ENCODE measurements at regions of chr1 and their contacts with region 1.

Region 1: GRCh38 chr1:114511032-114511785 is at the start of gene TRIM33:
- DNase-seq: peak; percentile 84 to 95 (median 93)
- H3K4me3 ChIP-seq: peak within 1 kb of the TSS; percentile 87
- H3K4me3 Mint-ChIP-seq: peak within 1 kb of the TSS; percentile 95 to 100 (median 99)
- H3K27ac ChIP-seq: peak within 1 kb of the TSS; percentile 99
- H3K27ac Mint-ChIP-seq: peak within 1 kb of the TSS; percentile 99 to 100 (median 100)
- H3K4me1 ChIP-seq: peaks cover 43% of the 10 kb centered on the region
- H3K4me1 Mint-ChIP-seq: peaks cover 52 to 59% (median 54%) of the 10 kb centered on the region in 3 donors
- H3K27me3 ChIP-seq: no peaks in the 10 kb centered on the region
- H3K27me3 Mint-ChIP-seq: peaks cover 0 to 7% of the 10 kb centered on the region in 2 donors
- total RNA-seq, gene TRIM33: 32.0 to 35.6 TPM

Region 2: DNA sequence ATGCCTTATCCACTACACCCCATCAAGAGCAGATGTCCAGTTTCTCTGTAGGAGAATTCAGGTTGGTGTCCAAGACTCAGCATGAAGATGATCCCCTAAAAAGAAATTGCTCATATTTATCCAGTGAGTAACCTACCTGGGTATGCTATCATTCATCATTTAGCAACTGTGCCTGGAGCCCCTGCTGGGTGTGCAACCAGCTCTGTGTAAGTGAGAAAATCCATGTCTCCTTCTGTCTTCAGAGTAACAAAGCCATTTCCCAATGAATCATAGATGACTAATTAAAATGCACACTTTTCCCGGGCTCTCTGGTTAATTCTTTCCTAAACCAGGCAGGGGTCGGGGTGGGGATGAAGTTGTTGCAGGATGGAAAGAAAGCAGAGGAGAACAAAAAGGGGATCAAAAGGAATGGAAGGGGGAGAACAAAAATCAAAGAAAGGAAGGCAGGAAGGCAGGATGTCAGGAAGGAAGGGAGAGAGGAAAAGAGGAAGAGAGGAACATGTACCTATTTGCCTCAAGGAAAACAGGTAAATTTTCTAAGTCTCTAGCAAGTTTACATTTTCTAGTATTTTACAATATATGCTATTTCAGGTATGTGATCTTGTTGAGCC is 496.0 kb before region 1 on chr1:
- CTCF ChIA-PET with region 1: no interaction called
- POLR2A ChIA-PET with region 1: no interaction called
- DNase-seq: no peak
- H3K4me3 ChIP-seq: no peak overlapping the region
- H3K4me3 Mint-ChIP-seq: no peak overlapping the region
- H3K27ac ChIP-seq: no peak overlapping the region
- H3K27ac Mint-ChIP-seq: no peak overlapping the region
- H3K4me1 ChIP-seq: no peaks in the 10 kb centered on the region
- H3K4me1 Mint-ChIP-seq: no peaks in the 10 kb centered on the region
- H3K27me3 ChIP-seq: no peaks in the 10 kb centered on the region
- H3K27me3 Mint-ChIP-seq: peaks cover 16 to 24% of the 10 kb centered on the region in 2 donors

Region 3: GRCh38 chr1:114418247-114418646 is 93.0 kb before region 1 on chr1:
- CTCF ChIA-PET with region 1: no interaction called
- POLR2A ChIA-PET with region 1: no interaction called
- DNase-seq: no peak
- H3K4me3 ChIP-seq: no peak overlapping the region
- H3K4me3 Mint-ChIP-seq: no peak overlapping the region
- H3K27ac ChIP-seq: no peak overlapping the region
- H3K27ac Mint-ChIP-seq: peak overlapping the region in 1 of 8 donors; percentile 6
- H3K4me1 ChIP-seq: no peaks in the 10 kb centered on the region
- H3K4me1 Mint-ChIP-seq: no peaks in the 10 kb centered on the region
- H3K27me3 ChIP-seq: no peaks in the 10 kb centered on the region
- H3K27me3 Mint-ChIP-seq: no peaks in the 10 kb centered on the region

Region 4: GRCh38 chr1:114482204-114482980 is 28.8 kb before region 1 on chr1:
- CTCF ChIA-PET with region 1: no interaction called
- POLR2A ChIA-PET with region 1: interaction called, 11 read pairs
- DNase-seq: peak in 2 of 5 donors; percentile 11 to 14
- H3K4me3 ChIP-seq: no peak overlapping the region
- H3K4me3 Mint-ChIP-seq: peak overlapping the region in 5 of 7 donors; percentile 8 to 55 (median 48)
- H3K27ac ChIP-seq: peak overlapping the region; percentile 2
- H3K27ac Mint-ChIP-seq: peak overlapping the region; percentile 14 to 95 (median 50)
- H3K4me1 ChIP-seq: peaks cover 16% of the 10 kb centered on the region
- H3K4me1 Mint-ChIP-seq: peaks cover 49 to 71% (median 70%) of the 10 kb centered on the region in 3 donors
- H3K27me3 ChIP-seq: no peaks in the 10 kb centered on the region
- H3K27me3 Mint-ChIP-seq: no peaks in the 10 kb centered on the region

Region 5: DNA sequence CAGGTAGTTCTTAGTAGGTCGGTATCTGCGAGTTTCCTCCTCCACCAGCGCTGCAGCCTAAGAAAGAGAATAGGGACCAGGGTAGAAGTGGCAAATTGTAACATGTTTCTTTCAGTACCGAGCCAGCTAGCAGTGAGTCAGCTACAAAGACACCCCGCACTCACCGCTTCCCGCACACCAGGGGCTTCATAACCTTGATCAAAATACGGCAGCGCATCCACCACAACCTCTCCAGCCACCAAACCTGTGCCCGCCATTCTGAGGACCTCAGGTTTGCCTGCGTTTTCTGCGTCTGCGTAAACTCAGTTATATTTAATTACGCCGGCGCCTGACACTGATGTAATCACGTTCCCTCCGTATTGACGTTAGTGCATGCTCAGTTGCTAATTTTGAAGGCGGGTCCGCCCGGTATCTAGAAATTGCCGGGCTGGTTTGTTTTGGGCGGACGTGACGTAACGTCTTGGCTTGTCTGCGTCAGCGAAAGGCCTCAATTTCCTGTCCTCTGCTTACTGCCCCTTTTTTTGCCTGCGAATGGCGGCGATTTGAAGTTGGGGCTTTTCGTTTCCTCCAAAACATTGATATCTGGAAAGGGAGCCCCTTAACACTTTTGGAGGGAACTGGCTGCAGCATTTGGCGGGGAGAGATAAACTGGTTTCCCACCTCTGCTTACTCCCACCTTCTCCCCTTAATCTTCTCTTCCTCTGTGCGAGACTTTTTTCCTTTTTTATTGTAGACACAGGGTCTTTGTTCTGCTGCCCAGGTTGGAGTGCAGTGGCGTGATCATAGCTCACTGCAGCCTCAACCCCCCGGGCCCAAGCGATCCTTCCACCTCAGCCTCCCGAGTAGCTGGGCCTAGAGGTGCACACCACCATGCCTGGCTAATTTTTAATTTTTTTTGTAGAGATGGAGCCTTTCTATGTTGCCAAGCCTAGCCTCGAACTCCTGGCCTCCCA is 70.4 kb after region 1 on chr1 and contains the start of gene BCAS2:
- CTCF ChIA-PET with region 1: interaction called, 3 read pairs
- POLR2A ChIA-PET with region 1: interaction called, 25 read pairs
- DNase-seq: peak; percentile 87 to 98 (median 96)
- H3K4me3 ChIP-seq: peak within 1 kb of the TSS; percentile 72
- H3K4me3 Mint-ChIP-seq: peak within 1 kb of the TSS; percentile 89 to 99 (median 97)
- H3K27ac ChIP-seq: peak within 1 kb of the TSS; percentile 92
- H3K27ac Mint-ChIP-seq: peak within 1 kb of the TSS; percentile 95 to 100 (median 99)
- H3K4me1 ChIP-seq: peaks cover 17% of the 10 kb centered on the region
- H3K4me1 Mint-ChIP-seq: peaks cover 29 to 54% (median 42%) of the 10 kb centered on the region in 3 donors
- H3K27me3 ChIP-seq: no peaks in the 10 kb centered on the region
- H3K27me3 Mint-ChIP-seq: no peaks in the 10 kb centered on the region
- total RNA-seq, gene BCAS2: 62.9 to 66.9 TPM

Region 6: DNA sequence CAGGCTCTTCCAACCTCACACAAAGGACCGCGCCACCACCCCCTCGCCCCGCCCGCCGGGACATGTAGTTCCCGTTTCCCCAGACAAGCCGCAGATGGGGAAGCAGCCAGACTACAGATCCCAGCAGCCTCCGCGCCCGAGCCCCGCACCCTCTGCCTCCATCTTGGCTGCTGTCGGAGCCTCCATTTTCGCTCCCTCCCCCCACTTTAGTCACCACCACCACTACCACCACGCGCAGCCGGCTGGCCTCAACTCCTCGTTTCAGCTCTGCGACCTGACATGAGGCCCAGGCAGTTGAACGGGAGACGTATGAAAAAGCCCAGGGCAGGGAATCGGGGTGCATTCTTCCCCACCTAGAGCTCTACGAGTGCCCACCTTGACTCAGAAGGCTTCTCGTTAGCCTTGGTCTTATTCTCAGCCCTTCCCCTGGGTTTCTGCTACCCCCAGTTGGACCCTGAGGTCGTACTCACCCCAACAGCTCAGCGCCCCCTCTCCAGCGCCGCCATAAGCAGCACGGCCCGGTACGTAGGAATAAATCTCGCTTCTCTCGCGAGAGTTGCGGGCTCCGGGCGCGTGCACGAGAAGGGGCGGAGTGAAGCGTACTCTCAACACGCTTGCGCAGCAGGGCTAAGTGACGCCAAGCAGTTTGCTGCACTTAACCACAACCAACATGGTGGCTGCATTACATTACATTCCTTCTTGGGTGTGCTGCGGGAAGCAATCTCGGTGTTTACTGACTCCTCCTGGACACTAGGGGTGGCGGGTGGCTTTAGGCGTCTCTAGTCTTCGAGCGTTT is 246.4 kb after region 1 on chr1 and contains the start of gene CSDE1:
- CTCF ChIA-PET with region 1: no interaction called
- POLR2A ChIA-PET with region 1: interaction called, 10 read pairs
- DNase-seq: peak; percentile 93 to 98 (median 96)
- H3K4me3 ChIP-seq: peak within 1 kb of the TSS; percentile 92
- H3K4me3 Mint-ChIP-seq: peak within 1 kb of the TSS; percentile 99 to 100 (median 100)
- H3K27ac ChIP-seq: peak within 1 kb of the TSS; percentile 99
- H3K27ac Mint-ChIP-seq: peak within 1 kb of the TSS; percentile 98 to 100 (median 100)
- H3K4me1 ChIP-seq: peaks cover 45% of the 10 kb centered on the region
- H3K4me1 Mint-ChIP-seq: peaks cover 52 to 63% (median 59%) of the 10 kb centered on the region in 3 donors
- H3K27me3 ChIP-seq: no peaks in the 10 kb centered on the region
- H3K27me3 Mint-ChIP-seq: no peaks in the 10 kb centered on the region
- total RNA-seq, gene CSDE1: 481 to 513 TPM

Measured in CD8-positive, alpha-beta memory T cell (primary cell).